PC-3 (cell line): ENCODE measurements at regions of chr10 and their contacts with region 1.

Region 1: GRCh38 chr10:79149662-79150443 is 81.1 kb downstream of the ZMIZ1 start:
- DNase-seq: peak; percentile 100
- ATAC-seq: peak; percentile 62
- H3K4me3 ChIP-seq: peak overlapping the region; percentile 2; the same call in 1 of the 2 replicates
- H3K27ac ChIP-seq: peak overlapping the region; percentile 77
- H3K4me1 ChIP-seq: peaks cover 67% of the 10 kb centered on the region
- H3K27me3 ChIP-seq: no peaks in the 10 kb centered on the region
- CTCF ChIP-seq: no peak

Region 2: GRCh38 chr10:78029269-78030226 is 1120.3 kb before region 1 on chr10 and contains the start of gene POLR3A:
- CTCF ChIA-PET with region 1: no interaction called
- POLR2A ChIA-PET with region 1: no interaction called
- intact Hi-C with region 1: loop called (anchors 5 kb)
- DNase-seq: peak; percentile 100
- ATAC-seq: peak; percentile 48
- H3K4me3 ChIP-seq: peak within 1 kb of the TSS; percentile 69
- H3K27ac ChIP-seq: peak within 1 kb of the TSS; percentile 23
- H3K4me1 ChIP-seq: peaks cover 47% of the 10 kb centered on the region
- H3K27me3 ChIP-seq: no peaks in the 10 kb centered on the region
- CTCF ChIP-seq: peak; percentile 100
- total RNA-seq, gene POLR3A: 97.0 and 97.2 TPM in 2 replicates

Region 3: GRCh38 chr10:78805176-78805575 is 344.7 kb before region 1 on chr10:
- CTCF ChIA-PET with region 1: no interaction called
- POLR2A ChIA-PET with region 1: interaction called, 20 read pairs
- intact Hi-C with region 1: loop called (anchors 1 kb)
- DNase-seq: peak; percentile 100
- ATAC-seq: peak; percentile 90
- H3K4me3 ChIP-seq: no peak overlapping the region
- H3K27ac ChIP-seq: peak overlapping the region; percentile 40
- H3K4me1 ChIP-seq: peaks cover 59% of the 10 kb centered on the region
- H3K27me3 ChIP-seq: no peaks in the 10 kb centered on the region
- CTCF ChIP-seq: no peak

Region 4: GRCh38 chr10:78991187-78991586 is 158.7 kb before region 1 on chr10:
- CTCF ChIA-PET with region 1: no interaction called
- POLR2A ChIA-PET with region 1: no interaction called
- intact Hi-C with region 1: loop called (anchors 1 kb)
- DNase-seq: peak; percentile 100
- ATAC-seq: peak; percentile 97
- H3K4me3 ChIP-seq: 0 out of 2 replicates have a peak overlapping the region, but pooled peaks have one; percentile 0
- H3K27ac ChIP-seq: peak overlapping the region; percentile 36
- H3K4me1 ChIP-seq: peaks cover 19% of the 10 kb centered on the region
- H3K27me3 ChIP-seq: no peaks in the 10 kb centered on the region
- CTCF ChIP-seq: no peak; the same call in 1 of the 2 replicates

Region 5: GRCh38 chr10:79028451-79029010 is 121.3 kb before region 1 on chr10:
- CTCF ChIA-PET with region 1: interaction called, 3 read pairs
- POLR2A ChIA-PET with region 1: interaction called, 14 read pairs
- intact Hi-C with region 1: no loop called
- DNase-seq: no peak
- ATAC-seq: no peak
- H3K4me3 ChIP-seq: no peak overlapping the region
- H3K27ac ChIP-seq: no peak overlapping the region
- H3K4me1 ChIP-seq: no peaks in the 10 kb centered on the region
- H3K27me3 ChIP-seq: peaks cover 28% of the 10 kb centered on the region
- CTCF ChIP-seq: no peak

Region 6: DNA sequence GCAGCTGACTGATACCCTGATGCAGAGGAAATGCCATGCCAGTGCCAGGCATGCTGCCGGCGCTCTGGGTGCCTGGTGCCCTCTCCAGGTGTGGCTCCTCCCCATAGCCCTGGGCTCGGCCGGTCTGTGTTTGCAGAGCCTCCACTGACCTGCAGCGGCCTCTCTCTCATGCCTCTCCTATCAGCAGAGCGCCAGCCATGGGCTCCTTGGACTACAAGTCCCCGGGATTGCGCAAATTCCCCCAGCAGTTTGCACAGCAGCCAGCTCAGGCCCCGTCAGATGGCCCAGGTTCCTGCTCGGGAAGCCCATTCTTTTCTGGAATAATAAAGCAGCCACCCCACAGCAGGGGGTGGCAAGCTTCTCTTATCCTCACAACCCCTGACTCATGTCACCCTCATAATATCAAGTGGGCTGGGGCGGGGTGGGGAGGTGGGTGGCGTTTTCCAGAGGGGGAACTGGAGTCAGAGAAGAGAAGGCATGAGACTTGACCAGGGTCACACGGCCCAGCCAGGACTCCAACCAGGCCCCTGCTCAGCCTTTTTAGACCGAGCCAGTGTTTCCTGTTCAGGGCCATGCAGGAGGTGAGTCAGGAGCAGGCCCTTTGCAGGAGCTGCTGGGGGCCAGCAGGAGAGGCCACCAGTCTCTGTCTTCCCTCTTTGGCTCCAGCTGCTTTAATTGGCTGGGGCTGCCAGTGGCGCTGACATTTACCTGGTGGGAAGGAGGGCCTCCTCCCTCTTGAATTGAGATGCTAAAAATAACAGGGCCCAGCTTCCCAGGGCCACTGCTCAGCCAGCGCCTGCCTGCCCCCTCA is 22.5 kb before region 1 on chr10:
- CTCF ChIA-PET with region 1: interaction called, 3 read pairs
- POLR2A ChIA-PET with region 1: no interaction called
- intact Hi-C with region 1: loop called (anchors 1 kb)
- DNase-seq: peak; percentile 100
- ATAC-seq: peak; percentile 90
- H3K4me3 ChIP-seq: no peak overlapping the region
- H3K27ac ChIP-seq: peak overlapping the region; percentile 62
- H3K4me1 ChIP-seq: peaks cover 41% of the 10 kb centered on the region
- H3K27me3 ChIP-seq: no peaks in the 10 kb centered on the region
- CTCF ChIP-seq: peak; percentile 54; the same call in 1 of the 2 replicates

Region 7: DNA sequence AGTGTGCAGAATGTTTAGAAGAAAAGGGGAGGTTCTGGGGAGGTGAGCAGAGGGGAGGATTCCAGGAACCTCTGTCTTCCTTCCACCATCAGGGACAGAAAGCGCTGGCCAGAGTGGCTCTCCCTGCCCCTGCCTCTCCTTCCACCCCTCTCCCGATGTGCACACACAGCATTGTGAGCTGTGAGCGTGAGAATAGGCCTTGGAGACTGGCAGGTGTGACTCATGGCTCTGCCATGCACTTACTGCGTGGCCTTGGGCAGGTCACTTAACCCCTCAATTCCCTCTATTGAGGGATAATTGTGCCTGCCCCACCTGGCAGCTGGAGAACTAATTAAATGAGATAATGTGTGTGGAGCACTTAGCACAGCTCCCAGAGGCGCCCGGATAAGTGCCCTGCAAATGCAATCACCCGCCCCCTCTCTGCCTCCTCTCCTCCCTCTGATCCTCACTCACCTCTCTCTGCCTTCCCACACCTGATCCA is 34.3 kb after region 1 on chr10:
- CTCF ChIA-PET with region 1: interaction called, 12 read pairs
- POLR2A ChIA-PET with region 1: interaction called, 3 read pairs
- intact Hi-C with region 1: loop called (anchors 1 kb)
- DNase-seq: peak; percentile 100
- ATAC-seq: peak; percentile 95
- H3K4me3 ChIP-seq: peak overlapping the region; percentile 2; the same call in 1 of the 2 replicates
- H3K27ac ChIP-seq: peak overlapping the region; percentile 67
- H3K4me1 ChIP-seq: peaks cover 35% of the 10 kb centered on the region
- H3K27me3 ChIP-seq: no peaks in the 10 kb centered on the region
- CTCF ChIP-seq: no peak